ENCODE measurements at regions of chr1 and their contacts with region 1.

Region 1: GRCh38 chr1:145996433-145997015 is at the start of gene TXNIP:
- DNase-seq: peak; percentile 88 to 98 (median 91)
- ATAC-seq: peak; percentile 67 to 85
- H3K4me3 Mint-ChIP-seq: peak within 1 kb of the TSS; percentile 91 to 100 (median 99)
- H3K27ac Mint-ChIP-seq: peak within 1 kb of the TSS; percentile 95 to 100 (median 99)
- H3K4me1 Mint-ChIP-seq: peaks cover 31 to 72% (median 51%) of the 10 kb centered on the region in 4 donors
- H3K27me3 Mint-ChIP-seq: no peaks in the 10 kb centered on the region
- polyA plus RNA-seq, gene TXNIP: 4,009 to 5,114 (median 5,016) TPM

Region 2: DNA sequence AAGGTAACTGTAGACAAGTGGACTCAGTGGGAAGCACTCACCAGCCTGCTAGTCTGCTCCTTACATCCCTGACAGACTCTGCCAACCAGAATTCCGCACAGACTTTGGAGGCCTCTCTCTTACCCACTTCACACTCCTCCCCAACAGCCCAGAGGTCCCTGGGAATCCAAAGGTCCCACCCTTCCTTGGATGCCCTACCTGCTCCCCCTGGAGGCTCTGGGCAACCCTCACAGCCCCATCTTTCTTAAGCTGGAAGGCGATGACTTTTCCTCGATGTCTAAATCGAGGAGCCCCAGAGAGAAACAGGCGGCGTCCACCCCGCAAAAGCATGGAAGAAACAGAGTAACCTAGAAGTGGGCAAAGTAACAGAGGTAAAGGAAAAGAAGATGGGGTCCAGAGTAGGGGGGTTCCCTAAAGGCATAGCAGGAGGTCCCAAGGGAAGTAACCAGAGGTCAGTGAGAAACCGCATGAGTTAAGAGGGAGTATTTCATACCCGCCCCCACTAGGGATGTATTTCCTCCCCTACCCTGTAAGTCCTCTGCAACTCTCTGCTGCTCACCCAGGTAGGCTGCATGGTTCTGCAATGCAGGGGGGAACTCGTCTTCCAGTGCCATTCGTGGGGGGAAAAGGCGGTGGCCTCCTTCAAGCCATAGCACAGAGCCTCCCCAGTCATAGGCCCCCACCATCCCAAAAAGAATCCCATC is 95.1 kb before region 1 on chr1:
- POLR2A ChIA-PET with region 1: no interaction called
- DNase-seq: no peak
- ATAC-seq: no peak
- H3K4me3 Mint-ChIP-seq: no peak overlapping the region
- H3K27ac Mint-ChIP-seq: peak overlapping the region in 1 of 10 donors; percentile 48
- H3K4me1 Mint-ChIP-seq: peaks cover 0 to 2% (median 0%) of the 10 kb centered on the region in 4 donors
- H3K27me3 Mint-ChIP-seq: no peaks in the 10 kb centered on the region

Region 3: DNA sequence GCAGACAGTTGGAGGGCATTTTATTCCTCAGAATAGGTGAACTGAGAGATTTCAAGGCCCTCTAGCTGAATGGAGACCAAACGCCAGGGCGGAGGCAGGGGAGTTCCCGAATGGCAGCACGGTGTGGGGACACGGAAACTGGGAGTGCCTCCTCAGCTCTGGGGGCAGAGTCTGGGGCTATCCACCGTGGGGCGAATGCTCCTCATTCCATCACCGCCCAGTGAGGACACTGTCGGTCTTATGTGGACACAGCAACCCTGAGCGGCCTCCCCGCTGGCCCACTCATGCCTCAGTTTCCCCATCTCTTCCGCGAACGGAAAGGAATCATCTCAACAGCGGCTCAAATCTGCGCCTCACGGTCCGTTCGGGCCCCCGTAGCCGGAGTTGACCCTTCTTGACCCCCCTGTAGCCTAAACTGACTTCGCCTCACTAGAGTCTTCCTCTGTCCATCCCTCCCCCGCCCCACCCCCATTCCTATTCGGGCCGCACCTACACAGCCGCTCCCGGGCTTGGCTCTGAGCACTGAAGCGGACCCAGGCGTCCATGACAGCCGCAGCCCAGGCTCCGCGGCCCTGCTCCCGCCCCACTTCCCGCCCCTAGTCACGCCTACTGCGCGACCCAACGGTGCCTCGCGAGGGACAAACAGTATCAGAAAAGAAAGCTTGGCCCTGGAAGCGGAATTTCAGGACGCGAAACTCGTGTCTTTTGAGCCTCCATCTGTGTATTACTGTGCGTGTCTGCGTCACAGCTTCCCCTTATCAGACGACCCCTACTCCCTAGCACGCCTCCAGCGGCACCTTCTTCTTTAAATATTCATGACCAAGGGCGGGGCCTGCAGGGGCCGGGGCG is 78.2 kb before region 1 on chr1 and contains the start of gene PEX11B:
- POLR2A ChIA-PET with region 1: interaction called, 24 read pairs
- DNase-seq: peak; percentile 86 to 96 (median 91)
- ATAC-seq: peak; percentile 91 to 92
- H3K4me3 Mint-ChIP-seq: peak within 1 kb of the TSS; percentile 87 to 94 (median 92)
- H3K27ac Mint-ChIP-seq: peak within 1 kb of the TSS; percentile 91 to 97 (median 96)
- H3K4me1 Mint-ChIP-seq: peaks cover 29 to 59% (median 52%) of the 10 kb centered on the region in 4 donors
- H3K27me3 Mint-ChIP-seq: no peaks in the 10 kb centered on the region
- polyA plus RNA-seq, gene PEX11B: 35.3 to 50.3 (median 44.0) TPM

Region 4: GRCh38 chr1:145978854-145979759 is 17.4 kb before region 1 on chr1:
- POLR2A ChIA-PET with region 1: interaction called, 1,573 read pairs
- DNase-seq: peak; percentile 42 to 91 (median 78)
- ATAC-seq: peak; percentile 74 to 79
- H3K4me3 Mint-ChIP-seq: no peak overlapping the region
- H3K27ac Mint-ChIP-seq: no peak overlapping the region
- H3K4me1 Mint-ChIP-seq: peaks cover 2 to 45% (median 39%) of the 10 kb centered on the region in 4 donors
- H3K27me3 Mint-ChIP-seq: no peaks in the 10 kb centered on the region

Region 5: DNA sequence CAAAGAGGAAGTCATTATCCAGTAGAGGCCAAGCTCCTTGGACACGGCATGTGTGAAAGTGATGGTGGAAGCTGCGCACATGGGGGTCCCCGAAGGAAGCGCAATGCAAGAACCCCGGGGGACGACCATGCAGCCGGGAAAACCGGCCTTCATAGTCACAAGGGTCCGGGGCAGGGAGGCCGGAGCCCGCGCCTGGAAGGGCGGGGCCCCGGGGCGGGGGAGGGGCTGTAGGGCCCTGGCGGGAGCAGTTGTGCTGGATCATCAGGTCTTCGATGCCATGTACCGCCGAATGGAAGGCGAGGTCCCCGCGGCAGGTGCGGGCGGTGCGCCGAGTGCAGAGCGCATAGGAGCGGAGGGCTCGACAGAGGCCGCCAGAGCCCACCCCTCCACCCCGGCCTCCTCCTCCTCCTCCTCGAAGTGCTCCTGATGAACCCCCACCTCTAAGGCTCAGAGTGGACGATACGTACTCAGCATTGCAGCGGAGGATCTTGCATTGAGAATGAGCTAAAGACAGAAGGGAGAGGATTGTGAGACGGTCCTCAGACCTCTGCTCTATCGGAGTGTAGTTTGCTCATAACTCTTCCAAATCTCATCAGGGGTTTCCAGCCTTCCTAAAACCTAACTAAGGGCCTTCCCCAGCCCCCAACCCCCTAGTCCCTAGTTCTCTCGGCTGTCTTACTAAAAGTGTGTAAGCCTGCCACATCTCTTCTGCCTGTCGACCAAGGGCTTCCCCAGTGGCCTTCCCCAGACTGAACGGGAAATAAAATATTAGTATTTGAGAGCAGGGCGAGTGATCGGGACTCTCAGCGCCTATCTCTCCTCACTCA is 22.9 kb after region 1 on chr1:
- POLR2A ChIA-PET with region 1: no interaction called
- DNase-seq: no peak
- ATAC-seq: peak; percentile 49 to 71
- H3K4me3 Mint-ChIP-seq: peak overlapping the region in 9 of 10 donors; percentile 19 to 80 (median 38)
- H3K27ac Mint-ChIP-seq: no peak overlapping the region
- H3K4me1 Mint-ChIP-seq: peaks cover 2 to 12% (median 10%) of the 10 kb centered on the region in 4 donors
- H3K27me3 Mint-ChIP-seq: peaks cover 23 to 56% (median 43%) of the 10 kb centered on the region in 5 donors

Measured in naive thymus-derived CD8-positive, alpha-beta T cell (primary cell).